OCI-LY7 (cell line): ENCODE measurements at regions of chr1 and their contacts with region 1.

Region 1: GRCh38 chr1:45455162-45455561 is 35.8 kb downstream of the TESK2 start:
- DNase-seq: no peak
- H3K4me3 ChIP-seq: no peak overlapping the region
- H3K27ac ChIP-seq: no peak overlapping the region
- H3K4me1 ChIP-seq: no peaks in the 10 kb centered on the region
- CTCF ChIP-seq: no peak

Region 2: GRCh38 chr1:45429561-45430159 is 25.5 kb before region 1 on chr1:
- CTCF ChIA-PET with region 1: no interaction called
- POLR2A ChIA-PET with region 1: interaction called, 4 read pairs
- intact Hi-C with region 1: loop called (anchors 5 kb)
- DNase-seq: no peak
- H3K4me3 ChIP-seq: no peak overlapping the region
- H3K27ac ChIP-seq: no peak overlapping the region
- H3K4me1 ChIP-seq: peaks cover 7% of the 10 kb centered on the region
- CTCF ChIP-seq: no peak

Region 3: DNA sequence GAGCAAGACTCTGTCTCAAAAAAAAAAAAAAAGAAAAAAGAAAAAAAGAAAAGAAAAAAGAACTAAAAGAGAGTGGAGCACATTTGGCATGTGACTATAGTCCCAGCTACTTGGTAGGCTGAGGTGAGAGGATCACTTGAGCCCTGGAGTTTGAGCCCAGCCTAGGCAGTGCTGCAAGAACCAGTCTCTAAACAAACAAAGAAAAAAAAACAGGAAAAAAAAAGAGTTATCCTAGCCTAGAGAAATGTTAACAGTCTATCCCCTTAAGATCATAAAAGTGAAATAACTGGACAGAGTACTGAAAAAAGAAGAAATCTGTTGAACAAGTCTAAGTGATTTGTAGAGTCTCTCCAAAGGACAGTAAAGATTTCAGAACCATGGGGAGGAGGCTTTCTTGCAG is 71.0 kb after region 1 on chr1:
- CTCF ChIA-PET with region 1: no interaction called
- POLR2A ChIA-PET with region 1: no interaction called
- intact Hi-C with region 1: no loop called
- DNase-seq: no peak
- H3K4me3 ChIP-seq: no peak overlapping the region
- H3K27ac ChIP-seq: no peak overlapping the region
- H3K4me1 ChIP-seq: peaks cover 17% of the 10 kb centered on the region
- CTCF ChIP-seq: no peak